Vagina (tissue), 2 donors: ENCODE measurements at regions of chr3 and their contacts with region 1.

Region 1: GRCh38 chr3:36693670-36694069 is 70.7 kb downstream of the DCLK3 start:
- DNase-seq: no peak
- H3K4me3 ChIP-seq: no peak overlapping the region
- H3K27ac ChIP-seq: no peak overlapping the region
- H3K4me1 ChIP-seq: no peaks in the 10 kb centered on the region
- H3K27me3 ChIP-seq: no peaks in the 10 kb centered on the region
- CTCF ChIP-seq: no peak
- POLR2A ChIP-seq: no peak

Region 2: GRCh38 chr3:35965908-35966307 is 727.8 kb before region 1 on chr3:
- intact Hi-C with region 1: loop called (anchors 2 kb)
- DNase-seq: no peak
- H3K4me3 ChIP-seq: no peak overlapping the region
- H3K27ac ChIP-seq: no peak overlapping the region
- H3K4me1 ChIP-seq: no peaks in the 10 kb centered on the region
- H3K27me3 ChIP-seq: no peaks in the 10 kb centered on the region
- CTCF ChIP-seq: peak; percentile 20 to 56 (median 27)
- POLR2A ChIP-seq: no peak